ENCODE measurements at regions of chr7 and their contacts with region 1.

Region 1: GRCh38 chr7:33836786-33837355 is 68.5 kb upstream of the BMPER start:
- DNase-seq: peak; percentile 21
- H3K4me3 ChIP-seq: no peak overlapping the region; a peak in 1 of 4 replicates
- H3K27ac ChIP-seq: no peak overlapping the region
- H3K4me1 ChIP-seq: peaks cover 0 to 10% of the 10 kb centered on the region in 2 experiments; a peak in 3 of 4 replicates
- H3K27me3 ChIP-seq: no peaks in the 10 kb centered on the region
- CTCF ChIP-seq: peak; percentile 69
- EP300 ChIP-seq: no peak
- RAD21 ChIP-seq: no peak

Region 2: GRCh38 chr7:33671531-33672262 is 165.2 kb before region 1 on chr7:
- CTCF ChIA-PET with region 1: no interaction called
- POLR2A ChIA-PET with region 1: no interaction called
- DNase-seq: no peak
- H3K4me3 ChIP-seq: no peak overlapping the region
- H3K27ac ChIP-seq: no peak overlapping the region
- H3K4me1 ChIP-seq: no peaks in the 10 kb centered on the region
- H3K27me3 ChIP-seq: no peaks in the 10 kb centered on the region
- CTCF ChIP-seq: no peak
- EP300 ChIP-seq: no peak
- RAD21 ChIP-seq: no peak

Region 3: DNA sequence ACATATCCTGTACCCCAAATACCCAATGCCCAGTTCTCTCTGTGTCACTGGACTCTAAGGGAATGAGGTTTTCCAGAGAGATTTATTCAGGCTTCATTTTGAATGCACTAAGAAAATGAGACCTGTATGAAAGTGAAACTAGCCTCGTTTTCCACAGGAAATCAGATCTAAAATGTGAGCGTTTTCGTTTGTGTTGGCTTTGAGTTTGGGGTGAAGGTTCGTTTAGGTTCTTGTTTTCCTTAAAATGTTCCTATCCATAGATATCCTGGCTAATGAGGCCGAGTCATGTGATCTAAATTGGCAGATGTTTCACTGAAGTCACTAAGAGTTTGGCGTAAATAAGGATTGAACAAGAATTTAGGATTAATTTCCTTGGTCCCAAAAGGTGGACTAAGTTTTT is 22.5 kb before region 1 on chr7:
- CTCF ChIA-PET with region 1: no interaction called
- POLR2A ChIA-PET with region 1: no interaction called
- DNase-seq: no peak
- H3K4me3 ChIP-seq: no peak overlapping the region
- H3K27ac ChIP-seq: no peak overlapping the region
- H3K4me1 ChIP-seq: peaks cover 0 to 3% of the 10 kb centered on the region in 2 experiments; a peak in 1 of 4 replicates
- H3K27me3 ChIP-seq: no peaks in the 10 kb centered on the region
- CTCF ChIP-seq: no peak
- EP300 ChIP-seq: no peak
- RAD21 ChIP-seq: no peak

Region 4: GRCh38 chr7:33849004-33849403 is 12.1 kb after region 1 on chr7:
- CTCF ChIA-PET with region 1: interaction called, 14 read pairs
- POLR2A ChIA-PET with region 1: no interaction called
- DNase-seq: no peak
- H3K4me3 ChIP-seq: no peak overlapping the region
- H3K27ac ChIP-seq: no peak overlapping the region
- H3K4me1 ChIP-seq: no peaks in the 10 kb centered on the region; a peak in 1 of 4 replicates
- H3K27me3 ChIP-seq: no peaks in the 10 kb centered on the region
- CTCF ChIP-seq: no peak
- EP300 ChIP-seq: no peak
- RAD21 ChIP-seq: no peak

Region 5: GRCh38 chr7:34036051-34036945 is 199.4 kb after region 1 on chr7:
- CTCF ChIA-PET with region 1: no interaction called
- POLR2A ChIA-PET with region 1: no interaction called
- DNase-seq: no peak
- H3K4me3 ChIP-seq: no peak overlapping the region
- H3K27ac ChIP-seq: no peak overlapping the region
- H3K4me1 ChIP-seq: peaks cover 0 to 20% of the 10 kb centered on the region in 2 experiments; a peak in 2 of 4 replicates
- H3K27me3 ChIP-seq: no peaks in the 10 kb centered on the region
- CTCF ChIP-seq: no peak
- EP300 ChIP-seq: no peak
- RAD21 ChIP-seq: no peak

Measured in SK-N-SH (cell line).